Sigmoid colon (tissue), 7 donors: ENCODE measurements at regions of chr11 and their contacts with region 1.

Region 1: GRCh38 chr11:85854557-85855340 is 434 bp upstream of the CCDC83 start:
- DNase-seq: peak; percentile 95
- H3K4me3 ChIP-seq: peak overlapping the region; percentile 35 to 69 (median 58)
- H3K27ac ChIP-seq: peak overlapping the region; percentile 81 to 87 (median 84)
- H3K4me1 ChIP-seq: peaks cover 0 to 14% (median 7%) of the 10 kb centered on the region in 4 donors
- H3K27me3 ChIP-seq: no peaks in the 10 kb centered on the region
- CTCF ChIP-seq: peak; percentile 68 to 99 (median 82)
- EP300 ChIP-seq: no peak
- POLR2A ChIP-seq: no peak

Region 2: DNA sequence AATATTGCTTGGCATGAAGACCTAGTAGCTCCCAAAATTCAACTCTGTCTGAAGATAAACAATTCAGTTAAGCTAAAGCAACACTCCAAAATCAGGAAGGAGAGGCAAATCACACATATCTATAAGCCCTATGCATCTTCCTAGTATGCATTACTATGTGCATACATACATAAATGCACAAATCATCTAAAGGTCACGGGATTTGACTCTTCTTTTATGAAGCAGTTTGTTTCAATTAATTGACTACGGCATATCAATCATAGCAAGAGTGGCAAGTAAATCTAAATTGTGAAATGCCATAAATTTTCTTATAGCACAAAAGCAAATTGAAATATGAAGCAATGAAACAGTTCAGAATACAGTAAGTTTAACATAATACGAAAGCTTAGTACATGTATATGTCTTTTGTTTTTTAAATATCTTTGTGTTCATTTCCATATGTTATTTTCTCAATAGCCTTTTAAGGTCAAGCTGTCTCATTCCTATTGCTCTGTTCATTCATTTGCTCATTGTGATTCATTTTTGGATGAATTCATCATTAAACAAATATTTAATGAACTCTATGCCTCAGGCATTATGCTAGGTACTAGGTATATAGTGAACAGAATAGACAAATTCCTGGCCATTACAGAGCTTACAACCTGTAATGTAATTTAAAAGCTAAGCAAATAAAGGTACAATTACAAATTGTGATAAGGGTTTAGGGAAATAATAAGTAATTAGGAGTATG is 768.0 kb before region 1 on chr11:
- intact Hi-C with region 1: no loop called
- DNase-seq: no peak
- H3K4me3 ChIP-seq: no peak overlapping the region
- H3K27ac ChIP-seq: no peak overlapping the region
- H3K4me1 ChIP-seq: no peaks in the 10 kb centered on the region
- H3K27me3 ChIP-seq: no peaks in the 10 kb centered on the region
- CTCF ChIP-seq: no peak
- EP300 ChIP-seq: no peak
- POLR2A ChIP-seq: no peak

Region 3: GRCh38 chr11:85595285-85595884 is 259.4 kb before region 1 on chr11:
- intact Hi-C with region 1: loop called (anchors 10 kb)
- DNase-seq: no peak
- H3K4me3 ChIP-seq: no peak overlapping the region
- H3K27ac ChIP-seq: no peak overlapping the region
- H3K4me1 ChIP-seq: no peaks in the 10 kb centered on the region
- H3K27me3 ChIP-seq: no peaks in the 10 kb centered on the region
- CTCF ChIP-seq: peak; percentile 14 to 52 (median 40)
- EP300 ChIP-seq: no peak
- POLR2A ChIP-seq: no peak

Region 4: GRCh38 chr11:85941380-85941973 is 86.7 kb after region 1 on chr11:
- intact Hi-C with region 1: loop called (anchors 10 kb)
- DNase-seq: peak; percentile 77
- H3K4me3 ChIP-seq: no peak overlapping the region
- H3K27ac ChIP-seq: no peak overlapping the region
- H3K4me1 ChIP-seq: no peaks in the 10 kb centered on the region
- H3K27me3 ChIP-seq: no peaks in the 10 kb centered on the region
- CTCF ChIP-seq: peak; percentile 21 to 77 (median 68)
- EP300 ChIP-seq: no peak
- POLR2A ChIP-seq: no peak

Region 5: GRCh38 chr11:86014221-86014620 is 159.5 kb after region 1 on chr11:
- intact Hi-C with region 1: no loop called
- DNase-seq: no peak
- H3K4me3 ChIP-seq: no peak overlapping the region
- H3K27ac ChIP-seq: no peak overlapping the region
- H3K4me1 ChIP-seq: peaks cover 0 to 21% (median 9%) of the 10 kb centered on the region in 4 donors
- H3K27me3 ChIP-seq: no peaks in the 10 kb centered on the region
- CTCF ChIP-seq: no peak
- EP300 ChIP-seq: no peak
- POLR2A ChIP-seq: no peak

Region 6: GRCh38 chr11:86218125-86219084 is 363.7 kb after region 1 on chr11:
- intact Hi-C with region 1: loop called (anchors 1 kb)
- DNase-seq: peak; percentile 77
- H3K4me3 ChIP-seq: peak overlapping the region in 2 of 4 donors; percentile 29 to 33
- H3K27ac ChIP-seq: no peak overlapping the region
- H3K4me1 ChIP-seq: peaks cover 0 to 8% (median 4%) of the 10 kb centered on the region in 4 donors
- H3K27me3 ChIP-seq: no peaks in the 10 kb centered on the region
- CTCF ChIP-seq: peak; percentile 63 to 89 (median 81)
- EP300 ChIP-seq: no peak
- POLR2A ChIP-seq: no peak

Region 7: GRCh38 chr11:86818466-86819192 is 963.9 kb after region 1 on chr11:
- intact Hi-C with region 1: loop called (anchors 5 kb)
- DNase-seq: no peak
- H3K4me3 ChIP-seq: no peak overlapping the region
- H3K27ac ChIP-seq: peak overlapping the region in 3 of 4 donors; percentile 80 to 92 (median 87)
- H3K4me1 ChIP-seq: peaks cover 0 to 58% (median 55%) of the 10 kb centered on the region in 4 donors
- H3K27me3 ChIP-seq: no peaks in the 10 kb centered on the region
- CTCF ChIP-seq: peak; percentile 64 to 82 (median 72)
- EP300 ChIP-seq: peak in 1 of 4 donors; percentile 8
- POLR2A ChIP-seq: no peak